AG04450 (cell line): ENCODE measurements at regions of chr2 and their contacts with region 1.

Region 1: GRCh38 chr2:85551698-85552678 is 9.3 kb downstream of the GGCX start:
- DNase-seq: no peak
- H3K4me3 ChIP-seq: no peak overlapping the region
- H3K27ac ChIP-seq: no peak overlapping the region
- H3K27me3 ChIP-seq: no peaks in the 10 kb centered on the region
- CTCF ChIP-seq: peak; percentile 93

Region 2: GRCh38 chr2:85327822-85328617 is 224.0 kb before region 1 on chr2 and contains the start of gene TGOLN2:
- CTCF ChIA-PET with region 1: interaction called, 12 read pairs
- POLR2A ChIA-PET with region 1: interaction called, 3 read pairs
- DNase-seq: peak; percentile 66
- H3K4me3 ChIP-seq: peak within 1 kb of the TSS; percentile 82
- H3K27ac ChIP-seq: peak within 1 kb of the TSS; percentile 80
- H3K27me3 ChIP-seq: no peaks in the 10 kb centered on the region
- CTCF ChIP-seq: no peak; the same call in 1 of the 2 replicates
- polyA plus RNA-seq, gene TGOLN2: 121 and 155 TPM in 2 replicates

Region 3: GRCh38 chr2:85390941-85391669 is 160.9 kb before region 1 on chr2:
- CTCF ChIA-PET with region 1: interaction called, 40 read pairs
- POLR2A ChIA-PET with region 1: no interaction called
- DNase-seq: no peak
- H3K4me3 ChIP-seq: no peak overlapping the region
- H3K27ac ChIP-seq: no peak overlapping the region
- H3K27me3 ChIP-seq: no peaks in the 10 kb centered on the region
- CTCF ChIP-seq: peak; percentile 74

Region 4: GRCh38 chr2:85420536-85421259 is 131.3 kb before region 1 on chr2:
- CTCF ChIA-PET with region 1: interaction called, 124 read pairs
- POLR2A ChIA-PET with region 1: interaction called, 37 read pairs
- DNase-seq: no peak
- H3K4me3 ChIP-seq: no peak overlapping the region; the same call in 1 of the 2 replicates
- H3K27ac ChIP-seq: peak overlapping the region; percentile 83
- H3K27me3 ChIP-seq: no peaks in the 10 kb centered on the region
- CTCF ChIP-seq: peak; percentile 97

Region 5: DNA sequence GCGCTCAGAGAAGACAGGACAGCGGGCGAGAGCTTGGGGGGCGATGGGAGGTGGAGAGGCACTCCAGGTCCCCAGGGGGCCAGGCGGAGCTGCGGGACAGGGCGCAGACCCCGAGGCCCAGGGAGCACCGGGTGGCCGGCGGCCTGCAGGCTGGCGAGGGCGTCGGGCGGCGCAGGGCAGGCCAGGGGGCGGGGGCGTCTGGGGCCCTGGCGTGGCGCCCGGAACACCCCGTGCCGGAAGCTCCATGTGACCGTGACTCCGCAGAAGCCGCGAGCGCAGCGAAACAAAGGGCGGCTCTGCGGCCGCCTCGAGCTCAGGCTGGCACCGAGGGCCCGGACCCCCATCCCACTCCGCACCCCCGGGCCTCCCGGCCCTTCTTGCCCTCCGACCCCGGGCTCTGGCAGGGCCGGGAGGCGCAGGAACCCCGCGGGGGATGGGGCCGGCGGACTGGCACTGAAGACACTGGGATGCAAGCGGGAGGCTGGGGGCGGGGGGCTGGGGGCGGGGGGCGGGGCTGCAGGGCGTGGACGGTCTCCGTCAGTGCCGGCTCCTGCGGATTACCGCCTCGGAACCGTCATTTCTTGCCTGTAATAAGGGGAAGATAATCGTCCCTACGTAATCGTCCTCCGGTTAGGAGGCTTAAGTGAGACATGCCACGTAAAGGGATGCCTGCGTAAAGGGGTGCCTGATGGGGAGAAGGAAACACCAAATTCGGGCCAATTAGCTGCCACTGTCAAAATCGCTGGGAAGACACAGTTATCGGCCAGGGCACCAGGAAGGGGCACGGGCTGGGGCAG is 114.3 kb before region 1 on chr2:
- CTCF ChIA-PET with region 1: interaction called, 4 read pairs
- POLR2A ChIA-PET with region 1: interaction called, 13 read pairs
- DNase-seq: no peak
- H3K4me3 ChIP-seq: peak overlapping the region; percentile 50
- H3K27ac ChIP-seq: peak overlapping the region; percentile 89
- H3K27me3 ChIP-seq: no peaks in the 10 kb centered on the region
- CTCF ChIP-seq: no peak